AG04450 (cell line): ENCODE measurements at regions of chr17 and their contacts with region 1.

Region 1: GRCh38 chr17:61737820-61738219 is 125.5 kb downstream of the BRIP1 start:
- DNase-seq: no peak
- H3K4me3 ChIP-seq: no peak overlapping the region
- H3K27ac ChIP-seq: no peak overlapping the region
- H3K27me3 ChIP-seq: no peaks in the 10 kb centered on the region
- CTCF ChIP-seq: no peak

Region 2: DNA sequence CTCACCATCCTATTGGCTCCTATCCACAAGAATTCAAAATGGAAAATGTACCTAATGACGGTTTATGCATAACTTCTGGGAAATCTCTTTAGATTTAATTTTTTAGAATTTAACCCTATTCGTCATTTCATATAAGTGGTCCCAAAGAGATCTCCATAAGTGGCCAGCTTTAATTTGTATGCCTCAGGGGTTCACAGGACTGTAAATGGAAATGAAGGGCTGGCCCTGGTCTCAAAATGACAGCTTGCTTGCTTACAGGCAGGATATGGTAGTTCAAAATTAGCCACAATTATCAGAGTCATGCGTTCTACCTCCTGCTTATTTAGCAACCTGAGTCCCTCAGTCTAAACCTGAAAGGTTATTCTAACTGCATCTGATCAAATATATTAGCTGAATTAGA is 140.2 kb before region 1 on chr17:
- CTCF ChIA-PET with region 1: interaction called, 16 read pairs
- POLR2A ChIA-PET with region 1: no interaction called
- DNase-seq: no peak
- H3K4me3 ChIP-seq: no peak overlapping the region
- H3K27ac ChIP-seq: no peak overlapping the region
- H3K27me3 ChIP-seq: peaks cover 16% of the 10 kb centered on the region
- CTCF ChIP-seq: no peak